Calu3 (cell line): ENCODE measurements at regions of chrX and their contacts with region 1.

Region 1: DNA sequence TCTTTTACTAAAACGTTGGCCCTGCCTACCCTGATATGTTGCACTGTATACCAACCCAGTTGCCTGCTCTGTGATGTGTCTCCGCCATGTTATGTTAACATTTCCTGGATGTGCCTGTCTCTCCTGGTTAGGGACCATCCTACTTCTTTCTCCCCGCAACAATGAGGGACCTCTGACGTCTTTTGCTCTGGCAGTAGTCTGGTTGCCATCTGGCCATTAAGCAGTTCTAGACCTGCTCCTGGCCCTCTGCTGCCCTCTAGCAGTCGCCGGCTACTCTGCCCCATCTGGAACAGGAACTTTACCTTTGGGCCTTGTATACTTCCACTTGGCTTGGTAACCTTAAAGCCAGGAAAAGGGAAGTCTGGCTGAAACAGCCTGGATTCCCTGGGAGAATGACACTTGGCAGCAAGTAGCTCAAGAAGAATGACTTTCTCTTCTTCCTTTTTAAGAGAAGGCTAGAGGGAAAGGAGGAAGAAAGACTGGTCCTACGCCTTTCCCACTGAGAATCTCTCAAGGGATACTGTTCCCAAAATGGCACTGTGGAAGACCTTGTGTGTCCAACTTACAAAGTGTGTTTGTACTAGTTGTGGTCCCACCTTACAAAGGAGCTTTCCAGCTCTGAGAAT is 63.5 kb downstream of the GPC3 start:
- DNase-seq: peak; percentile 75
- H3K4me3 Mint-ChIP-seq: peak overlapping the region; percentile 13
- H3K27ac Mint-ChIP-seq: peak overlapping the region; percentile 13
- H3K4me1 Mint-ChIP-seq: peaks cover 12% of the 10 kb centered on the region
- H3K27me3 Mint-ChIP-seq: no peaks in the 10 kb centered on the region
- CTCF ChIP-seq: peak; percentile 66

Region 2: DNA sequence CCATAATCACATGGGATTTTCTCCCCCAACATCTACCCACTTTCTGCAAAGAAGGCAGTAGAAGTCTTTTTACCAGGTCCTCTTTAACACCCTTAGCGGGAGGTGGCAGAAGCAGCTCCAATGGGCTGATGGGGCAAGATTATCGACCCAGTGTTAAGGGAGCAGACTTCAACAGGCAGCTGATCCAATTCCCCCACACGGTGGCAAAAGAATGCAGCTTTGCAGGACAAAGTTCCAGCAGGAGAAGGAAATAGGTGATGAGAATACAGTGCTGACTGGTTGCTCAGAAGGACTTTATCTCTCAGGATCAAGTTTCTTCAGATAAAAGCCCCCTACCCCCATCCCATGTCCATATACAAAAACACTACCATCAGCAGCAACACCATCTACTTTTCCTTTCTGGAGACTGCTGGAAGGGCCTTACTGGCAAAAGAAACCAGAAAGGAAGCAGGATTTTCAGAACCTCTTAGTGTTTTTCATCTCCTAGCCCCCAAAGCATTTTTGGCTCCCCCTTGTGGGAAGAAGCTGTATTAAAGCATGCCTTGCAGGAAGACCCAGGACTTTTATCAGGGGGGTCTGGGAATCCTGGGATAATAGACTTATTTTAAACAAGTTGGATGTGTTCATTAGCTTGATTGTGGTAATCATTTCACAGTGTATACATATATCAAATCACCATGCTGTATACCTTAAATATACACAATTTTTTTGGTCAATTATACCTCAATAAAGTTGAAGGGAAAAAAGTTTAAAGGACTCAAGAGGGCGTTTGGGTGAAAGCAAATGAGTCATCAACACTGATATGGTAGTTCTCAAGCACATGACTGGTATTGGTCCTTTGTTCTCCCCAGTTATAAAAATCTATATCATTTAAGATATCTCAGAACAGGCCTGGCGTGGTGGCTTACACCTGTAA is 82.9 kb before region 1 on chrX:
- CTCF ChIA-PET with region 1: interaction called, 5 read pairs
- intact Hi-C with region 1: loop called (anchors 5 kb)
- DNase-seq: peak; percentile 66
- H3K4me3 Mint-ChIP-seq: no peak overlapping the region
- H3K27ac Mint-ChIP-seq: no peak overlapping the region
- H3K4me1 Mint-ChIP-seq: peaks cover 10% of the 10 kb centered on the region
- H3K27me3 Mint-ChIP-seq: no peaks in the 10 kb centered on the region
- CTCF ChIP-seq: peak; percentile 46

Region 3: GRCh38 chrX:133859860-133860259 is 62.0 kb before region 1 on chrX:
- CTCF ChIA-PET with region 1: no interaction called
- intact Hi-C with region 1: loop called (anchors 5 kb)
- DNase-seq: no peak
- H3K4me3 Mint-ChIP-seq: no peak overlapping the region
- H3K27ac Mint-ChIP-seq: no peak overlapping the region
- H3K4me1 Mint-ChIP-seq: peaks cover 46% of the 10 kb centered on the region
- H3K27me3 Mint-ChIP-seq: no peaks in the 10 kb centered on the region
- CTCF ChIP-seq: no peak